ENCODE measurements at regions of chr6 and their contacts with region 1.

Region 1: GRCh38 chr6:144400321-144400720 is 115.2 kb downstream of the UTRN start:
- DNase-seq: no peak
- ATAC-seq: no peak
- H3K4me3 Mint-ChIP-seq: no peak overlapping the region
- H3K27ac Mint-ChIP-seq: no peak overlapping the region
- H3K4me1 Mint-ChIP-seq: peaks cover 22% of the 10 kb centered on the region
- H3K27me3 Mint-ChIP-seq: no peaks in the 10 kb centered on the region
- CTCF ChIP-seq: no peak

Region 2: GRCh38 chr6:143965503-143966171 is 434.7 kb before region 1 on chr6:
- CTCF ChIA-PET with region 1: no interaction called
- POLR2A ChIA-PET with region 1: no interaction called
- intact Hi-C with region 1: no loop called
- DNase-seq: no peak
- ATAC-seq: no peak
- H3K4me3 Mint-ChIP-seq: no peak overlapping the region
- H3K27ac Mint-ChIP-seq: no peak overlapping the region
- H3K4me1 Mint-ChIP-seq: no peaks in the 10 kb centered on the region
- H3K27me3 Mint-ChIP-seq: no peaks in the 10 kb centered on the region
- CTCF ChIP-seq: no peak

Region 3: GRCh38 chr6:144415014-144415413 is 14.7 kb after region 1 on chr6:
- CTCF ChIA-PET with region 1: no interaction called
- POLR2A ChIA-PET with region 1: no interaction called
- intact Hi-C with region 1: loop called (anchors 2 kb)
- DNase-seq: no peak
- ATAC-seq: no peak
- H3K4me3 Mint-ChIP-seq: no peak overlapping the region
- H3K27ac Mint-ChIP-seq: no peak overlapping the region
- H3K4me1 Mint-ChIP-seq: peaks cover 46% of the 10 kb centered on the region
- H3K27me3 Mint-ChIP-seq: no peaks in the 10 kb centered on the region
- CTCF ChIP-seq: no peak

Region 4: DNA sequence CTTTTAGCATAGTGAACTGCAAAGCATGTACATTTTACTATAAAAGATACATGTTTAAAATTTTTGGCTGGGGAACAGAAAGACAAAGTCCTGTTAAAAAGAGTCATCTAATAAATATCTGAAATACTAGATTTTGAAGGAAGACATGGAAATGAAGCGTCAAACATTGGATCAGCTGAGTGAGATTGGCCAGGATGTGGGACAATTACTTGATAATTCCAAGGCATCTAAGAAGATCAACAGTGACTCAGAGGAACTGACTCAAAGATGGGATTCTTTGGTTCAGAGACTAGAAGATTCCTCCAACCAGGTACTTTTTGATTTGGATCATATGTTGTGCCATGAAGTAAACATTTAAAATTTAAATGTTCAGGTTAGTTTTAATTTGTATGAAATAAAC is 47.2 kb after region 1 on chr6:
- CTCF ChIA-PET with region 1: no interaction called
- POLR2A ChIA-PET with region 1: no interaction called
- intact Hi-C with region 1: no loop called
- DNase-seq: no peak
- ATAC-seq: no peak
- H3K4me3 Mint-ChIP-seq: no peak overlapping the region
- H3K27ac Mint-ChIP-seq: peak overlapping the region; percentile 50
- H3K4me1 Mint-ChIP-seq: no peaks in the 10 kb centered on the region
- H3K27me3 Mint-ChIP-seq: no peaks in the 10 kb centered on the region
- CTCF ChIP-seq: no peak

Measured in activated B cell treated with CpG ODN at 0.5 μM for 24 hours (primary cell).